ENCODE measurements at regions of chr17 and their contacts with region 1.

Region 1: DNA sequence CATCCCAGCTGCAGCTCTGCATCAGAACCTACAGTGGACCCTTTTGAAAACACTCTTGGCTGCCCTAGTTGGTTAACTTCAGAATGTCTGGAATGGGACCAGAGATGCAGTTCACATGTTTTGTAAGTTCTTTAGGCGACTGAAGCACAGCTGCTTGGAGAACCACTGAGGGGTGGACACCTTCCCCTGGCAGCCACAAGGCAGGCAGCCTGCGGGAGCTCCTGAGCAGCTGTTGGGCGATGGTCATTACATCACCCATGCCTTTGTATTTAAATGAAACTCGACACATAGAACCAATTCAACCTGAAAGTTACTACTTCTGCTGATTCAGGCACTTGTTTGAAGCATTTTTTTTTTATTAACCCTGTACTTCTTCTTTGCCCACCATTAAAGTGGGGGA is 151.5 kb downstream of the LGALS9B start:
- DNase-seq: no peak
- H3K4me3 ChIP-seq: no peak overlapping the region
- H3K27ac ChIP-seq: no peak overlapping the region
- H3K4me1 ChIP-seq: no peaks in the 10 kb centered on the region
- H3K27me3 ChIP-seq: no peaks in the 10 kb centered on the region
- CTCF ChIP-seq: no peak
- POLR2A ChIP-seq: no peak

Region 2: DNA sequence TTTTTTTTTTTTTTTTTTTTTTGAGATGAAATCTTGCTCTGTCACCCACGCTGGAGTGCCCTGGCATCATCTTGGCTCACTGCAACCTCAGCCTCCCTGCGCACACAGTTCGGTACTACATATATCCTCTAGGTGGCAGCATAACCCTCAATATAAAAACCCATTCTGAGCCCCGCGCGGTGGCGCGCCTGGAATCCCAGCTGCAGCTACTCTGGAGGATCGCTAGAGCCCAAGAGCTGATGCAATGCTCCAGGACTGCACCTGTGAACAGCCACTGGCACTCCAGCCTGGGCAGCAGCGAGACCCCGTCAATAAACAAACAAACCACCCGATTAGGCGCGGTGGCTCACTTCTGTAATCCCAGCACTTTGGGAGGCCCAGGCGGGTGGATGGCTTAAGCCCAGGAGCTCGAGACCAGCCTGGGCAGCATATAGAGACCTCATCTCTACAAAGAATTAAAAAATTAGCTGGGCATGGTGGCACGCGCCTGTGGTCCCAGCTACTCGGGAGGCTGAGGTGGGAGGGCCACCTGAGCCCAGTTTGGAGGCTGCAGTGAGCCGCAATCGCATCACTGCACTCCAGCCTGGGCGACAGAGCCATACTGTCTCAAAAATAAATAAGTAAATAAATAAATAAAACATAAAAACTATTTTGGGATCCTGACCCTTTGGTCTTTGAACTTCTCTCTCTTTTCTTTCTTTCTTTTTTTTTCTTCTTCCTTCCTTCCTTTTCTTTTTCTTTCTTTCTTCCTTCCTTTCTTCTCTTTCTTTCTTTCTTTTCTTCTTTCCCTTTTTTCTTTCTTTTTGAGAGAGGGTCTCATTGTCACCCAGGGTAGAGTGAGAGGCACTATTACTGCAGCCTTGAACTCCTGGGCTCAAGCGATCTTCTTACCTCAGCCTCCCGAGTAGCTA is 322.8 kb before region 1 on chr17:
- intact Hi-C with region 1: loop called in 1 of 2 experiments (anchors 10 kb)
- DNase-seq: peak; percentile 82 to 96 (median 91)
- H3K4me3 ChIP-seq: no peak overlapping the region
- H3K27ac ChIP-seq: no peak overlapping the region
- H3K4me1 ChIP-seq: peaks cover 0 to 4% of the 10 kb centered on the region in 2 donors
- H3K27me3 ChIP-seq: peaks cover 3% of the 10 kb centered on the region
- CTCF ChIP-seq: peak; percentile 62 to 89 (median 81)
- POLR2A ChIP-seq: no peak

Region 3: DNA sequence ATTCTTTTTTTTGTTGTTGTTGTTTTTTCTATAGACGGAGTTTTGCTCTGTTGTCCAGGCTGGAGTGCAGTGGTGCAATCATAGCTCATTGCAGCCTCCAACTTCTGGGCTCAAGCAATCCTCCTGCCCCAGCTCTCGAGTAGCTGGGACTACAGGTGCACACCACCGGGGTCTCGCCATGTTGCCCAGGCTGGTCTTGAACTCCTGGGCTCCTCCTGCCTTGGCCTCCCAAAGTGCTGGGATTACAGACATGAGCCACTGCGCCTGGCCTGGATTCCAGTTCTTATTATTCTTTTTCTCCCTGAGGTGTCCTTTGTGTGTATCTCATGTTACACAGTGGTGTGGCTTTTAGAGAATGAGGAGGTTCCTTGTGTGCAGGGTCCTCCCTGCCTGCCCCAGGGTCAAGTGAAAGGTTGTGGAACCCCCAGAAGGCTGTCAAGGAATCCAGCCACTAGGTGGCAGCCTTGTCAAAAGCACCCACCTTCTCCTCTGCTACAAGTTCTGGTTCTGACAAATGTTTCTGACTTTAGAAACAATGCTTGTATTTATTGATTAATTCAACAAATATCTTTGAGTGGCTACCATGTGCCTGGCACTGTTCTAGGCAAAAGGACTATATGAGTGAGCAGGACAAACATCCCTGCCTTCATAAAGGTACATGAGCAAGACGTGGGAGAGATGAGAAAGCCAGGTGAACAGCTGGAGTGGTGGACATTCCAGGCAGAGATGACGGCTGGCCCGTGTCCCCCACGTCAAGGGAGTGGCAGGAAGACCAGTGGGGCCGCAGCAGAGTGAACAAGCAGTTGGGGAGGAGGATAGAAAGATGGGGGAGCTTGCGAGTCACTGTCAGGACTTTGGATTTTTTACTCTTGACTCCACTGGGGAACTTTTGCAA is 194.2 kb before region 1 on chr17:
- intact Hi-C with region 1: loop called (anchors 5 to 10 kb)
- DNase-seq: peak; percentile 48 to 80 (median 67)
- H3K4me3 ChIP-seq: no peak overlapping the region
- H3K27ac ChIP-seq: no peak overlapping the region
- H3K4me1 ChIP-seq: peaks cover 0 to 7% of the 10 kb centered on the region in 2 donors
- H3K27me3 ChIP-seq: no peaks in the 10 kb centered on the region
- CTCF ChIP-seq: peak; percentile 78 to 93 (median 84)
- POLR2A ChIP-seq: no peak

Region 4: GRCh38 chr17:20256144-20256543 is 59.7 kb before region 1 on chr17:
- intact Hi-C with region 1: no loop called
- DNase-seq: no peak
- H3K4me3 ChIP-seq: no peak overlapping the region
- H3K27ac ChIP-seq: no peak overlapping the region
- H3K4me1 ChIP-seq: no peaks in the 10 kb centered on the region
- H3K27me3 ChIP-seq: no peaks in the 10 kb centered on the region
- CTCF ChIP-seq: no peak
- POLR2A ChIP-seq: no peak

Region 5: DNA sequence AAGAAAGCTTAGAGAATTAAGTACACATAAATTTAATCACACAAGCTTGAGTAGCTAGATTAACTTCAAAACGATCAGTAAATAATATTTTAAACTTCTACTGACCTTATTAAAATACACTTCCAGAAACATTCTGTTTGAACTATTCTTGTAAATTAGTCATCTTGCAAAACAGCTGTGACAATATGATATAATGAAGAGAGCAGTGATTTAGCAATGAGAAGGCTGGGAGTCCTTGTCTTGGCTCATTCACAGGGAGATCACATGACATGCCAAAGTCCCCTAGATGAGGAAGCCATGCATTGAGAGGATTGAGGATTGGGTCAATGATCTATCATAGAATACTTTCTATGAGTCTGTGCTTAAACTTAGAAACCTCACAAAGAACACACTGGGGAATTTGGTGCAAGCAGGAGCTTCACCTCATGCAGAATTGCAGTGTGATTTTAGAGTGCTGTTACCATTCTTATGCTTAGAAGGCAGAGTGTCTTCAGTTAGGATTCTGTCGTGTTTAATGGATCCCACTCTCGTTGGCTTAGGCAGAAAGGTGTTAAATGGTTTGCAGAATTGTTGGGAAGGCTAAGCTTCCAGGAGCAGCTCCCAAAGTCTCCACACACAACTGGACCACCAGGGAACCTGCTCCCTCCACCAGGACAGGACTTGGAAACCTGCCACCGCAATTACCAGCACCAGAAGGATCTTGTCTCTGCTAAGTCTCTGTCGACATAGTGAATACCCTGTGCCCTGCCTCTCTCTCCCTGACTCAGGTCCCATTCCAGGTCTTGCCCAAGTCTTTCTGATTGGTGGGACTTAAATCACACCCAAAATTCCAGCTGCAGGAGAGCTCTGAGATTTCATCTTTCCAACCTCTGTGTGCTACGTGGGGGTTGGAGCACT is 639.9 kb after region 1 on chr17:
- intact Hi-C with region 1: no loop called
- DNase-seq: peak in 4 of 7 donors; percentile 40 to 63 (median 51)
- H3K4me3 ChIP-seq: peak overlapping the region in 1 of 4 donors; percentile 4
- H3K27ac ChIP-seq: peak overlapping the region in 4 of 5 donors; percentile 38 to 76 (median 66)
- H3K4me1 ChIP-seq: peaks cover 14 to 15% of the 10 kb centered on the region in 2 donors
- H3K27me3 ChIP-seq: no peaks in the 10 kb centered on the region
- CTCF ChIP-seq: no peak
- POLR2A ChIP-seq: no peak

Measured in adrenal gland (tissue), 19 donors.